ENCODE measurements at regions of chr1 and their contacts with region 1.

Region 1: DNA sequence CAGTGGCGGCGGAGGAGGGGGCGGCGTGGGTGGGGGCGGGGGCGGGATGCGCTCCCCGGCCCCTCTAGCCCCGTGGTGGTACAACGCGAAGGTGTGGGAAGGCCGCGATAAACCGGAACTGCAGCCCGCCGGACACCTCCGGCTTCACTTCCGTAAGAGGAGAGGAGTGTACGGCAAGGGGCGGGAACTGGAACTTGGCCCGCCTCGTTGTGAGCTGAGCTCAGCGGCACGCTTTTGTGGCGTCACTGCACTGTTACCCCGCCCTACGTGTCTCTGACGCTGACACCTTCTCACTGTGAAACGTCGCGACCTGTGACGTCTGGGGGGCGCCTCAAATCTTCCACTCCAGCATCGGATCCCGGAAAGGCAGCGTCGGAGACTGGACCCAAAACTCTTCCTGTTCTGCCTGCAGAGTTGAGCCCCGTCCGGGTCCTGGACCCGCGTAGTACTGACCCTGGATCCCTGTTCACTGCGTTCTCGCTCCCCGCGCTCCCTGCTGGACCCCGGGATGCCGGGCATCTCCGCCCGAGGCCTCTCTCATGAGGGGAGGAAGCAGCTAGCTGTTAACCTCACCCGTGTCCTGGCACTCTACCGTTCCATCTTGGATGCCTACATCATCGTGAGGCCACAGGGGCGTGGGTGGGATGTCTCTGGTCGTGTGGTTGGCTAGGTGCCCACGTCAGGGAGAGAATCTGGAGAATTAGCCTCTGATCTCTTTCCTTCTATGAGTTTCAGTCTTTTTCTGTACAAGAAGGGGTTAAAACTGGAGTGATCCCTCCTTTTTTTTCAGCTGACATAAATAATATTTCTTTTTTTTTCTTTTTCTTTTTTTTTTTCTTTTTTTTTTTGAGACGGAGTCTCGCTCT is at the start of gene ISG20L2:
- DNase-seq: peak; percentile 91
- ATAC-seq: peak; percentile 88
- H3K4me3 Mint-ChIP-seq: no peak within 1 kb of the TSS
- H3K27ac Mint-ChIP-seq: peak within 1 kb of the TSS; percentile 99
- H3K4me1 Mint-ChIP-seq: peaks cover 24% of the 10 kb centered on the region
- H3K27me3 Mint-ChIP-seq: no peaks in the 10 kb centered on the region
- total RNA-seq, gene ISG20L2: 44.1 to 47.1 TPM

Region 2: GRCh38 chr1:156689035-156689952 is 39.5 kb before region 1 on chr1:
- POLR2A ChIA-PET with region 1: interaction called, 10 read pairs
- DNase-seq: peak; percentile 74
- ATAC-seq: peak; percentile 93
- H3K4me3 Mint-ChIP-seq: no peak overlapping the region
- H3K27ac Mint-ChIP-seq: peak overlapping the region; percentile 64
- H3K4me1 Mint-ChIP-seq: peaks cover 24% of the 10 kb centered on the region
- H3K27me3 Mint-ChIP-seq: peaks cover 61% of the 10 kb centered on the region

Region 3: GRCh38 chr1:156746728-156747631 is 18.1 kb after region 1 on chr1:
- POLR2A ChIA-PET with region 1: interaction called, 82 read pairs
- DNase-seq: peak; percentile 59
- ATAC-seq: no peak
- H3K4me3 Mint-ChIP-seq: peak overlapping the region; percentile 99
- H3K27ac Mint-ChIP-seq: peak overlapping the region; percentile 93
- H3K4me1 Mint-ChIP-seq: peaks cover 50% of the 10 kb centered on the region
- H3K27me3 Mint-ChIP-seq: no peaks in the 10 kb centered on the region

Region 4: DNA sequence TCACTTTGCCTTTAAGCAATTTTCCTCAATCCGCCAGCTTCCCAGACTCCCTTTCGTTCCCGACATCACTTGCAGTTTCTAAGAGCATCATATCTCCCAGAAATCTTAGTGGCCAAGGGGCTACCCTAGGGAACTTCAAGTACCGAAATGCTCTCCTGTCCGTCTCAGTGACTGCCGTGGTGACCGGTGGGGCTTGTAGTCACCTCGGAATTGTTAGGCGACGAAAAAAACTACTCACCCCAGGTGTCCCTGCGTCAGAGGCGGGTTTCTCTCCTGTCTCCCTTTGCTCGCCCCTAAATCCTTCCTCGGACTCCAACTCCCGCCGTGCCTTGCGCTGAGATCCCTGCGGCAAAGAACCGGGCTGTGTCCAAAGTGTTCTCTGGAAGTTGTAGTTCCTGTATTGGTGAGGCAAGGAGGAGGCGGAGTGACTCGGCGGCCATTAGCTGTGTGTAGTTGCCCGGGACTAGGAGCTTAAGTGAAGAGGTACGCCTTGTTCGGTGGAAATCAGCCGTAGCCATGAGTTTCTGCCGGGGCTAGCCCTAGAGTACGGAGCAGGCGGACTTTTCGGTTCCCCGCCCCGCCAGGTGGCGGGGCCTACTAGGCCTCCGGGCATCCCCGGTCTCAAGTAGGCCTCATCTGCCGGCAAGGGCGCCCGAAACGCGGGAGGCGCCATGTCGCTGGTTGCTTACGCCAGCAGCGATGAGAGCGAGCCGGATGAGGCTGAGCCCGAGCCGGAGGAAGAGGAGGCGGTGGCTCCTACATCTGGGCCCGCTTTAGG is 38.5 kb after region 1 on chr1 and contains the start of gene PRCC:
- POLR2A ChIA-PET with region 1: interaction called, 24 read pairs
- DNase-seq: peak; percentile 89
- ATAC-seq: peak; percentile 96
- H3K4me3 Mint-ChIP-seq: no peak within 1 kb of the TSS
- H3K27ac Mint-ChIP-seq: no peak within 1 kb of the TSS
- H3K4me1 Mint-ChIP-seq: peaks cover 34% of the 10 kb centered on the region
- H3K27me3 Mint-ChIP-seq: no peaks in the 10 kb centered on the region
- total RNA-seq, gene PRCC: 65.7 to 76.0 TPM

Region 5: GRCh38 chr1:156860113-156860627 is 131.3 kb after region 1 on chr1:
- POLR2A ChIA-PET with region 1: interaction called, 14 read pairs
- DNase-seq: peak; percentile 80
- ATAC-seq: peak; percentile 40
- H3K4me3 Mint-ChIP-seq: peak overlapping the region; percentile 85
- H3K27ac Mint-ChIP-seq: peak overlapping the region; percentile 58
- H3K4me1 Mint-ChIP-seq: peaks cover 43% of the 10 kb centered on the region
- H3K27me3 Mint-ChIP-seq: peaks cover 37% of the 10 kb centered on the region